ENCODE measurements at regions of chr2 and their contacts with region 1.

Region 1: DNA sequence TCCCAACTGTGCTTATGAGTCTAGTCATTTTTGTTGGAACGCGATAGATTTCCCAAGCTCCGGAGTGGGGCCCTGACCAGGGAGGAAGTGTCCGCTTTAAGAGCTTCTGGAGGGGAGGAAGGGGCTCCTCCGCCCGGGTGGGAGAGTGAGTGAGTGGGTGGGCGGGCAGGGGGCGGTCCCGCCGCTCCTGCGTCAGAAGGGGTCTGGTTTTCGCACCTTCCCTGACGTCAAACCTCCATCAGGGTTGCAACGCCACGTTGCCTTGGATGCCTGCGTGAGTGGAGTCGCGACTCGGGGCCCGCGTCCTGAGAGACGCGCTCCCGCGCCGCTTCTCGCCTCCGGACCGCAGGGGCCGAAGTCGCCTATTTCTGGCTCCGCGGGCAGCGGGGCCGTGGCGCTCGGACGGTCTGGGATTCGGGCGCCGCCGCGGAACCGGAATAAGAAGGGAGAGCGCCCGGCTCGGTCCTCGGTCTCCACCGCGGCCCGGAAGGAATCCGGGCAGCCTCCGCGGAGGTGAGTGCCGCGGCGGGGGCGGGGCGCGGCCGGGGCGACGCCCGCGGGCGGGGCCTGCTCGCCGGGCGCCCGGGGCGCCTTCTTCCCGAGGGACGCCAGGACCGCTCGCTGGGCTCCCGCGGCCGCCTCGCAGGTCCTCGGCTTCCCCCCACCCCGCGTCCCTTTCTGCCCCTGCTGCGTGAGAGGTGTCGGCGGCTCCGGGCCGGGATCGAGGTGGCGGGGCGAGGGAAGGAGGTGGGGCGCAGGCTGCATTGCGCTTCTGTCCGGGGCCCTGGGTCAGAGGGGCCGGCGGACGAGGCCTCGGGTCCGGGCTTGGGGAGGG is at the start of gene ZDBF2:
- DNase-seq: peak; percentile 48 to 68 (median 64)
- H3K4me3 ChIP-seq: peak within 1 kb of the TSS in 1 of 2 donors; percentile 61
- H3K4me3 Mint-ChIP-seq: peak within 1 kb of the TSS; percentile 83 to 92 (median 88)
- H3K27ac ChIP-seq: peak within 1 kb of the TSS; percentile 63
- H3K27ac Mint-ChIP-seq: peak within 1 kb of the TSS; percentile 72 to 94 (median 89)
- H3K4me1 ChIP-seq: peaks cover 13% of the 10 kb centered on the region
- H3K4me1 Mint-ChIP-seq: peaks cover 15 to 25% (median 21%) of the 10 kb centered on the region in 4 donors
- H3K27me3 ChIP-seq: peaks cover 11% of the 10 kb centered on the region
- H3K27me3 Mint-ChIP-seq: peaks cover 16 to 28% of the 10 kb centered on the region in 2 donors
- total RNA-seq, gene ZDBF2: 18.6 to 21.4 TPM

Region 2: DNA sequence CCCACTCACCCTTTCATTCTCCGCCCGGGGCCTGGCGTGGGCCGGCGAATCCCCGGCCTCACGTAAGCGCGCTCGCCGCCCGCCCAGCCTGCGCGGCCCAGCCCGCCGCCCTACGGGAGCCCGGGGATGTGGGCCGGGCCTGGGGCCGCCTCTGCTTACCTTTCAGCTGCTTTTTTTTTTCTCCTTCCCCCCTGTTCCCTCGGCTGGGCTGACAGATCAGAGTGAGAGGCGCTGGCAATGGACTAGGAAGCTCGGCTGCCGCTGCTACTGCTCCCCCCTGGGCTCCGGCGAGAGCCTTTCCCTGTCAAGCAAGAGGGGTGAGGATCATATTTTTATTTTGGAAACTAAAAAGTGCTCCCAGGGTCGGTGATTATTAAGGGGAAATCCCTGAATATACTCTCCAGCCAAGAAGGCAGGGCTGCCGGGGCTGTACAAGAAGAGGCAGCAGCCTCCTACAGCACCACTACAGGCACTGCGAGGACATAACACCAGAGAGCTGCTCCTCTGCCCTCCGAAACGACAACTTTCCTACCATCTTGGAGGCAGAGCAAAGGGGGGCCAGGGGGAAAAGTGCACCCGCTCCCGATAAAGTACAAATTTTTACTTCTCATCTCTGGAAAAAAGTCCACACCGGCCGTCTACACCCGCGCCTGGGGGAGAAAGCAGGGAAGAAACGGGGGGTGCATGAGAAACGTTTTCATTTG is 188.8 kb before region 1 on chr2 and contains the start of gene INO80D:
- CTCF ChIA-PET with region 1: no interaction called
- POLR2A ChIA-PET with region 1: interaction called, 4 read pairs
- intact Hi-C with region 1: loop called (anchors 10 kb)
- DNase-seq: peak; percentile 88 to 91 (median 89)
- H3K4me3 ChIP-seq: peak within 1 kb of the TSS; percentile 81 to 94
- H3K4me3 Mint-ChIP-seq: peak within 1 kb of the TSS; percentile 98 to 100 (median 99)
- H3K27ac ChIP-seq: peak within 1 kb of the TSS; percentile 98
- H3K27ac Mint-ChIP-seq: peak within 1 kb of the TSS; percentile 99 to 100 (median 100)
- H3K4me1 ChIP-seq: peaks cover 44% of the 10 kb centered on the region
- H3K4me1 Mint-ChIP-seq: peaks cover 24 to 54% (median 37%) of the 10 kb centered on the region in 4 donors
- H3K27me3 ChIP-seq: no peaks in the 10 kb centered on the region
- H3K27me3 Mint-ChIP-seq: no peaks in the 10 kb centered on the region
- total RNA-seq, gene INO80D: 40.2 to 41.3 TPM

Region 3: DNA sequence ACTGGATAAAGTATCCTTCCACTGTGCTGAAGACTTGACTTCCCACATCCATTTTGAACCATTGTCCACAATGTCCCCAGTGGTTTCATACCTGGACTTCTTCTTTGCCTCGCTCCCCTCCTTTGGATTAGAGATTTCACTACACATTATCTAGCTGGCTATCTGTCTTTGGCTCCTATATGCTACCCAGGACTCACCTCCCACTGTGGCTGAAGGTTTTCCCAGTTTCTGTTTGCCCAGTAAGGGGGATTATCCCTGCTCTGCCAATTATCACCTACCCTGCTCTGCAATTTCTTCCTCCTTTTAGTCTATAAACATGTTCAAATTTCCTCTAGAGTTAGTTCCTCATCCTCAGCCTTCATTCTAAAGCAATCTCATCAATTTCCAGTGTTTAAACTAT is 124.5 kb before region 1 on chr2:
- CTCF ChIA-PET with region 1: no interaction called
- POLR2A ChIA-PET with region 1: no interaction called
- intact Hi-C with region 1: no loop called
- DNase-seq: no peak
- H3K4me3 ChIP-seq: no peak overlapping the region
- H3K4me3 Mint-ChIP-seq: no peak overlapping the region
- H3K27ac ChIP-seq: no peak overlapping the region
- H3K27ac Mint-ChIP-seq: peak overlapping the region in 5 of 7 donors; percentile 2 to 77 (median 30)
- H3K4me1 ChIP-seq: peaks cover 8% of the 10 kb centered on the region
- H3K4me1 Mint-ChIP-seq: peaks cover 9 to 24% (median 18%) of the 10 kb centered on the region in 4 donors
- H3K27me3 ChIP-seq: no peaks in the 10 kb centered on the region
- H3K27me3 Mint-ChIP-seq: no peaks in the 10 kb centered on the region

Region 4: GRCh38 chr2:206212673-206213513 is 61.8 kb before region 1 on chr2:
- CTCF ChIA-PET with region 1: no interaction called
- POLR2A ChIA-PET with region 1: no interaction called
- intact Hi-C with region 1: no loop called
- DNase-seq: no peak
- H3K4me3 ChIP-seq: no peak overlapping the region
- H3K4me3 Mint-ChIP-seq: no peak overlapping the region
- H3K27ac ChIP-seq: no peak overlapping the region
- H3K27ac Mint-ChIP-seq: no peak overlapping the region
- H3K4me1 ChIP-seq: peaks cover 3% of the 10 kb centered on the region
- H3K4me1 Mint-ChIP-seq: peaks cover 0 to 2% (median 0%) of the 10 kb centered on the region in 4 donors
- H3K27me3 ChIP-seq: peaks cover 5% of the 10 kb centered on the region
- H3K27me3 Mint-ChIP-seq: peaks cover 7 to 17% of the 10 kb centered on the region in 2 donors

Region 5: GRCh38 chr2:206518997-206519396 is 244.3 kb after region 1 on chr2:
- CTCF ChIA-PET with region 1: no interaction called
- POLR2A ChIA-PET with region 1: no interaction called
- intact Hi-C with region 1: no loop called
- DNase-seq: no peak
- H3K4me3 ChIP-seq: no peak overlapping the region
- H3K4me3 Mint-ChIP-seq: no peak overlapping the region
- H3K27ac ChIP-seq: no peak overlapping the region
- H3K27ac Mint-ChIP-seq: no peak overlapping the region
- H3K4me1 ChIP-seq: no peaks in the 10 kb centered on the region
- H3K4me1 Mint-ChIP-seq: no peaks in the 10 kb centered on the region
- H3K27me3 ChIP-seq: no peaks in the 10 kb centered on the region
- H3K27me3 Mint-ChIP-seq: peaks cover 0 to 8% of the 10 kb centered on the region in 2 donors

Region 6: GRCh38 chr2:207792244-207792785 is 1517.7 kb after region 1 on chr2:
- CTCF ChIA-PET with region 1: no interaction called
- POLR2A ChIA-PET with region 1: no interaction called
- intact Hi-C with region 1: no loop called
- DNase-seq: no peak
- H3K4me3 ChIP-seq: no peak overlapping the region
- H3K4me3 Mint-ChIP-seq: no peak overlapping the region
- H3K27ac ChIP-seq: no peak overlapping the region
- H3K27ac Mint-ChIP-seq: no peak overlapping the region
- H3K4me1 ChIP-seq: no peaks in the 10 kb centered on the region
- H3K4me1 Mint-ChIP-seq: no peaks in the 10 kb centered on the region
- H3K27me3 ChIP-seq: no peaks in the 10 kb centered on the region
- H3K27me3 Mint-ChIP-seq: peaks cover 3 to 11% of the 10 kb centered on the region in 2 donors